CD8-positive, alpha-beta T cell (primary cell): ENCODE measurements at regions of chr5 and their contacts with region 1.

Region 1: DNA sequence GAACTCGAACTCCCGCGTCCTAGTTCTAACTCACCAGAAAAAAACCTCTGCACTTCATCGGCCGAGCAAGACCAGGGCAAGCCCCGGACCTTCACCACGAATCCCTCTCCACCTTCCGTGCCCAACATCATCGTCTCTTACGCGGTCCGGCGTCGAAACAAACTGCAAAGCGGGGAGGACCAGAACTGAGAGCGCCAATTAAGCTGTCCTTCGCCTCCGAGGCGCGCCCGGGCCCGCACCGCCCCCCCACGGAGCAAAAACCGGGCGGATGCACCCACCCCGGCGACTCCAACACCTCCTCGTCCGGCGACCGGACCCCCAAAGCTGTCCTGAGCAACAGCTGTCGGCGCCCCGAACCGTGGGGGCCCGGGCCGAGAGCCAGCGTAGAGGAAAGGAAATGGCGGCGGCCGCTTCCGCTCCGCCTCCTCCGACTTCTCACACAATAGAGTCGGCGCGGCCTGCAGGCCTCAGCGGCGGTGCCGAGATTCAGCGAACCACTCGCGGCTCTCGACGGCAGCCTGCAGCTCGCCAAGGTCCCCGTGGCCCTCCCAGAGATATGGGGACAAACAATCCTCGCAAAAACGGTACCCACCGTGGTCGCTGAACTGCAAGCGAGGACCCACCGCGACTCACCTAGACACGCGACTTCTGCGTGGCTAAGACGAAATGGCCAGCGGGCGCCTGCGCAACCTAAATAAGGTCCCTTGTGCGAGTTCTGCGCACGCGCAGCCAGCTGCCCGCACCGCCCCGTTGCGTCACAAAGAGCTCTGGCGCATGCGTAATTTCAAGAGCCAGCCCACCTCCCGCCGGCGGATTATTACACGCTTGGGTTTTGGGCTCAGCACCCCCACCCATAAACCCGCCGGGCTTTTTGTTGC is at the start of gene HNRNPH1:
- DNase-seq: peak; percentile 97 to 99 (median 98)
- ATAC-seq: peak; percentile 74
- H3K4me3 ChIP-seq: peak within 1 kb of the TSS; percentile 86 to 98
- H3K4me3 Mint-ChIP-seq: peak within 1 kb of the TSS; percentile 95
- H3K27ac ChIP-seq: peak within 1 kb of the TSS; percentile 97 to 99
- H3K27ac Mint-ChIP-seq: peak within 1 kb of the TSS; percentile 98
- H3K4me1 ChIP-seq: peaks cover 48% of the 10 kb centered on the region
- H3K4me1 Mint-ChIP-seq: peaks cover 44% of the 10 kb centered on the region
- H3K27me3 ChIP-seq: no peaks in the 10 kb centered on the region
- H3K27me3 Mint-ChIP-seq: no peaks in the 10 kb centered on the region
- CTCF ChIP-seq: no peak
- total RNA-seq, gene HNRNPH1: 2,565 to 2,635 TPM

Region 2: GRCh38 chr5:179536676-179537075 is 86.6 kb before region 1 on chr5:
- CTCF ChIA-PET with region 1: no interaction called
- POLR2A ChIA-PET with region 1: no interaction called
- intact Hi-C with region 1: no loop called
- DNase-seq: no peak
- ATAC-seq: no peak
- H3K4me3 ChIP-seq: no peak overlapping the region
- H3K4me3 Mint-ChIP-seq: no peak overlapping the region
- H3K27ac ChIP-seq: no peak overlapping the region
- H3K27ac Mint-ChIP-seq: no peak overlapping the region
- H3K4me1 ChIP-seq: peaks cover 5% of the 10 kb centered on the region
- H3K4me1 Mint-ChIP-seq: no peaks in the 10 kb centered on the region
- H3K27me3 ChIP-seq: no peaks in the 10 kb centered on the region
- H3K27me3 Mint-ChIP-seq: no peaks in the 10 kb centered on the region
- CTCF ChIP-seq: no peak

Region 3: DNA sequence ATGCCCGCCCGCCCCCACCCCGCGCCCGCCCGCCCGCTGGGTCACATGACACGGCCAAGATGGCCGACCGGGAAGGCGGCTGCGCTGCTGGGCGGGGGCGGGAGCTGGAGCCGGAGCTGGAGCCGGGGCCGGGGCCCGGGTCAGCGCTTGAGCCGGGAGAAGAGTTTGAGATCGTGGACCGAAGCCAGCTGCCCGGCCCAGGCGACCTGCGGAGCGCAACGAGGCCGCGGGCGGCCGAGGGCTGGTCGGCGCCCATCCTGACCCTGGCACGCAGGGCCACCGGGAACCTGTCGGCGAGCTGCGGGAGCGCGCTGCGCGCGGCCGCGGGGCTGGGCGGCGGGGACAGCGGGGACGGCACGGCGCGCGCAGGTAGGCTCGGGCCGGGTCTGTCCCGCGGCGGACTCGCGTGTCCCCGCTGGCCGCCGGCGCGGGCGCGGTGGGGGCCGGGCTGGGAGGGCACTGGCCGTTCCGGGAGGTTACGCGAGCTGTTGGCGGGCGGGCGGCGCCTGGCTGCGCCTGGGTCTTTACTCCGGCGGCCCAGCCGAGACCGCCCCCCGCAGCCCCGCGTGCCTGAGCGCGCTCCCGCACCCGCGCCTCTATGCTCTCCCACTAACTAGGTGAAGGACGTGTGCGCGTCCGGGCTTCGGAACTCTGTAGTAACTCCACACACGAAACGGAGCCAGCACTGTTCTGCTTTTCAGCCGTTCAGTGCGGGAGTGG is 72.6 kb before region 1 on chr5 and contains the start of gene RUFY1:
- CTCF ChIA-PET with region 1: interaction called, 3 read pairs
- POLR2A ChIA-PET with region 1: interaction called, 46 read pairs
- intact Hi-C with region 1: loop called (anchors 1 kb)
- DNase-seq: peak; percentile 69 to 91 (median 82)
- ATAC-seq: peak; percentile 71
- H3K4me3 ChIP-seq: peak within 1 kb of the TSS; percentile 89 to 98
- H3K4me3 Mint-ChIP-seq: peak within 1 kb of the TSS; percentile 97
- H3K27ac ChIP-seq: peak within 1 kb of the TSS; percentile 76 to 80
- H3K27ac Mint-ChIP-seq: peak within 1 kb of the TSS; percentile 97
- H3K4me1 ChIP-seq: peaks cover 26% of the 10 kb centered on the region
- H3K4me1 Mint-ChIP-seq: peaks cover 42% of the 10 kb centered on the region
- H3K27me3 ChIP-seq: no peaks in the 10 kb centered on the region
- H3K27me3 Mint-ChIP-seq: no peaks in the 10 kb centered on the region
- CTCF ChIP-seq: no peak
- total RNA-seq, gene RUFY1: 19.6 to 19.8 TPM

Region 4: DNA sequence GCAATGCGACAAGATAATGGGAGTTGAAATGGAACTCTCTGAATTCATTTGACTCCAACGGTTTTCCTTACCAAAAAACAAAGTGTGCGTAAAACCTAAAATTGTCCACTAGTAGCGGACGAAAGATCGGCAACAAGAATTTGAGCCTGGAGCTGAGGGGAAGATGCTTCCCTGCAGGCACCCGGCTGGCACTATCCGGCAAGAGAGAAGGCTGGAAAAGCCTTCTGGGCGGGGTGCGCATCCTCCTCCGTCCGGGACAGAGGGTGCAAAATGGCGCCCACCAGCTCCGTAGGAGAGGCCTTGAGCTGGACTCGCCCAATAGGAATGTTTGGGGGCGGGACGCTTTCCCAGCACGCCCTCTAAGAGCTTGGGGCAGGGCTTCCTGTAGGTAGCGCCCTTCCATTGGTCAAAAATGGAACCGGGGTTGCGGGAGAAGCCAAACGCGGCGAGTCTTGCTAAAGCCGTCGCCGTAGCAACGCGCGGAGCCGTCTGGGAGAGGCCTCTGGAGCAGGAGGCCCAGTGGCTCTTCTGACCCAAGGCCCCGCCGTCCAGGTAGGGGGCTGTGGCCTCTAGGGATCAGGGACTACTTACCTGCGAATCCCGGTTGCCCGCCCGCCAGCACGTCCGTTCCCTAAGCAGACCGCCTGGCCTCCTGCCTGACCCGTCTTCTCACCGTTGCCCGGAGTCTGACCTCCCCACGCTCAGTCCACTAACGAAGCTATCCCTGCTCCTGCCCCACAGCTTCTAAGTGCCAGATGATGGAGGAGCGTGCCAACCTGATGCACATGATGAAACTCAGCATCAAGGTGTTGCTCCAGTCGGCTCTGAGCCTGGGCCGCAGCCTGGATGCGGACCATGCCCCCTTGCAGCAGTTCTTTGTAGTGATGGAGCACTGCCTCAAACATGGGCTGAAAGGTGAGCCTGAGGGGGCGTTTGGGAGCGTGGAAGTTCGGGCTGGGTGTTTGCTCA is 63.7 kb before region 1 on chr5:
- CTCF ChIA-PET with region 1: no interaction called
- POLR2A ChIA-PET with region 1: interaction called, 27 read pairs
- intact Hi-C with region 1: no loop called
- DNase-seq: peak; percentile 77 to 95 (median 86)
- ATAC-seq: peak; percentile 100
- H3K4me3 ChIP-seq: peak overlapping the region; percentile 70 to 77
- H3K4me3 Mint-ChIP-seq: peak overlapping the region; percentile 85
- H3K27ac ChIP-seq: peak overlapping the region; percentile 66 to 68
- H3K27ac Mint-ChIP-seq: peak overlapping the region; percentile 87
- H3K4me1 ChIP-seq: no peaks in the 10 kb centered on the region
- H3K4me1 Mint-ChIP-seq: peaks cover 18% of the 10 kb centered on the region
- H3K27me3 ChIP-seq: no peaks in the 10 kb centered on the region
- H3K27me3 Mint-ChIP-seq: no peaks in the 10 kb centered on the region
- CTCF ChIP-seq: no peak

Region 5: DNA sequence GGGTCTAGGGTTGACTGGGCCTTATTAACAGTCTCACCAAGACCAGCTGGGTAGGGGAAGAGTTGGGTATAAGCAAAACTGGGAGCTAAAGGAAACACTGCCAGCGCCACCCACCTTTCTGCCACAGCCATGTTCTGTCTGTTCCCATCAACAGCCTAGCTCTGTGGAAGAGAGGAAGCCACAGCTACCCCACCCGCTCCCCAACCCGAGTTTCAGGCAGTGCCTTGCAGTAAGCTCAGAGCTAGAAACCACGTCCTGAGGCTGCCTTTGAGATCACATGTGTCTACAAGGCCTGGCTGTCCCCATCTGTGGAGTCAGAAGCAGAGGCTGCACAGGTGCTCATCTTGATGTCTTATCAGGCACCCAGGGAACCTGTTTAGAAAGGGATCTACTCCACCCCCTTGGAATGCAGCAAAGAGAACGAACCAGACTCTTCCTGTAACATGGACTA is 15.1 kb before region 1 on chr5:
- CTCF ChIA-PET with region 1: interaction called, 48 read pairs
- POLR2A ChIA-PET with region 1: interaction called, 32 read pairs
- intact Hi-C with region 1: loop called in 1 of 2 experiments (anchors 1 kb)
- DNase-seq: peak in 7 of 9 experiments; percentile 20 to 69 (median 47)
- ATAC-seq: peak; percentile 82
- H3K4me3 ChIP-seq: no peak overlapping the region
- H3K4me3 Mint-ChIP-seq: peak overlapping the region; percentile 37
- H3K27ac ChIP-seq: no peak overlapping the region
- H3K27ac Mint-ChIP-seq: peak overlapping the region; percentile 70
- H3K4me1 ChIP-seq: peaks cover 25% of the 10 kb centered on the region
- H3K4me1 Mint-ChIP-seq: peaks cover 45% of the 10 kb centered on the region
- H3K27me3 ChIP-seq: no peaks in the 10 kb centered on the region
- H3K27me3 Mint-ChIP-seq: no peaks in the 10 kb centered on the region
- CTCF ChIP-seq: no peak

Region 6: DNA sequence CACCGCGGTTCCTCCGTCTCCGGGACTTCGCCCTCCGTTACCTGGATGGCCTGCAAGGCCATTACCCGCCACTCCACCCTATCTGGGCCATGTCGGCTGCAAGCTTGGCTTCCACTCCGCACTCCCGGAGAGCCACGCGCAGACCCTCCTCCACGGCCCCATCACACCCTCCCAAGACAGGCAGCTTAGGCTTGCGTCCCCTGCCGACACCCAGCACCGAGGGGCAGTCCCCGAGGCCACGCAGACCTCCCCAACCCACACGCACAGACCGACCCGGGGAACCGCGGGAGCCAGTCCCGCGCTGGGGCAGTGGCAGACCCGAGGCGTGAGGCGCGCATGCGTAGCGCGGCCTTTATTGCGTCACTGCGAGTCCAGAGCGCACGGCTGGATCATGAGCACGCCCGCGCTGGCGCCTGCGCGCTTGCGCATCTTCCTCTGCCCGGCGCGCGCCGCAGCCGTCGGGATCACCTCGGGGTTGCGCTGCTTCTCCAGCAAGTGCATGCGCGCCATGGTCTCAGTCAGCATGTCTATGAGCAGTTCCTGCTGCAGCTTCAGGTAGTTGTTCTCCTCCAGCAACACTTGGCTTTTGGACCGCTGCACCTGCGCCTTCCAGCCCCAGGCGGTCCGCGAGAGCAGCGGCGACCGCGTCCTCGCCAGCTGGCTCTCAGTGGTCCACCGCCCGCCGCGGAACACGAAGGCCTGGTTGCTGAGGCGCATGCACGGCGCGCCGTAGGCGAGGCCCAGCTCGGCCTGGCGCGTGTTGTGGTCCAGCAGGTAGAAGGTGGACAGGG is 55.2 kb after region 1 on chr5:
- CTCF ChIA-PET with region 1: interaction called, 4 read pairs
- POLR2A ChIA-PET with region 1: interaction called, 26 read pairs
- intact Hi-C with region 1: loop called in 1 of 2 experiments (anchors 1 kb)
- DNase-seq: peak; percentile 85 to 98 (median 92)
- ATAC-seq: peak; percentile 85
- H3K4me3 ChIP-seq: peak overlapping the region; percentile 66 to 98
- H3K4me3 Mint-ChIP-seq: peak overlapping the region; percentile 98
- H3K27ac ChIP-seq: peak overlapping the region; percentile 83 to 91
- H3K27ac Mint-ChIP-seq: peak overlapping the region; percentile 99
- H3K4me1 ChIP-seq: peaks cover 22% of the 10 kb centered on the region
- H3K4me1 Mint-ChIP-seq: peaks cover 37% of the 10 kb centered on the region
- H3K27me3 ChIP-seq: no peaks in the 10 kb centered on the region
- H3K27me3 Mint-ChIP-seq: no peaks in the 10 kb centered on the region
- CTCF ChIP-seq: no peak

Region 7: GRCh38 chr5:179697993-179698934 is 75.0 kb after region 1 on chr5:
- CTCF ChIA-PET with region 1: interaction called, 3 read pairs
- POLR2A ChIA-PET with region 1: interaction called, 10 read pairs
- intact Hi-C with region 1: loop called (anchors 1 kb)
- DNase-seq: peak; percentile 97 to 100 (median 98)
- ATAC-seq: peak; percentile 87
- H3K4me3 ChIP-seq: peak overlapping the region; percentile 84 to 89
- H3K4me3 Mint-ChIP-seq: peak overlapping the region; percentile 99
- H3K27ac ChIP-seq: peak overlapping the region; percentile 92 to 94
- H3K27ac Mint-ChIP-seq: peak overlapping the region; percentile 100
- H3K4me1 ChIP-seq: peaks cover 32% of the 10 kb centered on the region
- H3K4me1 Mint-ChIP-seq: peaks cover 40% of the 10 kb centered on the region
- H3K27me3 ChIP-seq: no peaks in the 10 kb centered on the region
- H3K27me3 Mint-ChIP-seq: no peaks in the 10 kb centered on the region
- CTCF ChIP-seq: no peak

Region 8: GRCh38 chr5:179768326-179769085 is 145.3 kb after region 1 on chr5:
- CTCF ChIA-PET with region 1: no interaction called
- POLR2A ChIA-PET with region 1: no interaction called
- intact Hi-C with region 1: no loop called
- DNase-seq: no peak
- ATAC-seq: no peak
- H3K4me3 ChIP-seq: no peak overlapping the region
- H3K4me3 Mint-ChIP-seq: no peak overlapping the region
- H3K27ac ChIP-seq: no peak overlapping the region
- H3K27ac Mint-ChIP-seq: no peak overlapping the region
- H3K4me1 ChIP-seq: no peaks in the 10 kb centered on the region
- H3K4me1 Mint-ChIP-seq: peaks cover 20% of the 10 kb centered on the region
- H3K27me3 ChIP-seq: no peaks in the 10 kb centered on the region
- H3K27me3 Mint-ChIP-seq: no peaks in the 10 kb centered on the region
- CTCF ChIP-seq: no peak

Region 9: DNA sequence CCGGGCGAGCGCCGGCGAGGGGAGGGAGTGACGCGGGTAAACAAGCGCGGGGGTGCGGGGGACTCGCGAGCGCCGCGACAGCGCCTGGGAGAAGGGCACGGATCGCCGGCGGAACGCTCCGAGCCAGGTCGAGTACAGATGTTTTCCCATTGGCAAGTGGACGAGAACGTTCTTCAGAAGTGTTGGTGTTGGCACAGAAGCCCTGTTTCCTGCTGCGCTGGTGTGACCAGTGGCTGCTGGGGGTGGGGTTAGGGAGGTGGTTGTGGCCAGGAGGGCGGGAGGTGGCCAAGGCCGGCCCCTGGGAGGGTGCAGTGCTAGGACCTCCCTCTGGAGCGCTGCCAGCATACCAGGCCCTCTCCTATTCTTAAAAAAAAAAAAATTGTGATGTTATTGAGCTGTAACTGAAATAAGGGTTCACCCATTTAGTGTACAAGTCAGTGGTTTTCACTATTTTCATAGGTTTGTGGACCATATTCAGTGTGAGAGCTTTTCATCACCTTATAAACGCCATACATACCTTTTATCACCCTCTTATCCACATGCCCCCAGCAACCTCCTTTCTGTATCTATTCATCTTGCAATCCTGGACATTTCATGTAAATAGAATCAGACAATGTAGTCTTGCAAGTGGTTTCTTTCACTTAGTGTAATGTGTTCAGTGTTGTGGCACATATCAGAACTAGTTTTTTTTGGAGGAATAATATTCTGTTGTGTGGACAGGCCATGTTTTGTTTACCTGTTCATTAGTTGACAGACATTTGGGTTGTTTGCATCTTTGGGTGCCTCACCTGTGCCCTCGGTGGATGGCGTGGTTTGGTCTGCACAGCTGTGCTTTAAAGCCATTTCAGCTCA is 198.6 kb after region 1 on chr5:
- CTCF ChIA-PET with region 1: no interaction called
- POLR2A ChIA-PET with region 1: interaction called, 11 read pairs
- intact Hi-C with region 1: loop called in 1 of 2 experiments (anchors 2 kb)
- DNase-seq: peak; percentile 79 to 94 (median 88)
- ATAC-seq: peak; percentile 63
- H3K4me3 ChIP-seq: peak overlapping the region; percentile 81 to 94
- H3K4me3 Mint-ChIP-seq: peak overlapping the region; percentile 95
- H3K27ac ChIP-seq: peak overlapping the region; percentile 92 to 99
- H3K27ac Mint-ChIP-seq: peak overlapping the region; percentile 96
- H3K4me1 ChIP-seq: peaks cover 47% of the 10 kb centered on the region
- H3K4me1 Mint-ChIP-seq: peaks cover 59% of the 10 kb centered on the region
- H3K27me3 ChIP-seq: peaks cover 0 to 2% of the 10 kb centered on the region in 2 experiments
- H3K27me3 Mint-ChIP-seq: no peaks in the 10 kb centered on the region
- CTCF ChIP-seq: no peak